ENCODE measurements at regions of chr19 and their contacts with region 1.

Region 1: GRCh38 chr19:33235269-33235995 is 9.8 kb upstream of the SLC7A10 start:
- DNase-seq: peak; percentile 96
- ATAC-seq: peak; percentile 77
- H3K4me3 Mint-ChIP-seq: no peak overlapping the region
- H3K27ac Mint-ChIP-seq: no peak overlapping the region
- H3K4me1 Mint-ChIP-seq: peaks cover 2% of the 10 kb centered on the region; the same call in 1 of the 2 replicates
- H3K27me3 Mint-ChIP-seq: peaks cover 3% of the 10 kb centered on the region
- CTCF ChIP-seq: peak; percentile 86

Region 2: GRCh38 chr19:33098023-33098652 is 137.3 kb before region 1 on chr19:
- CTCF ChIA-PET with region 1: no interaction called
- POLR2A ChIA-PET with region 1: no interaction called
- DNase-seq: no peak
- ATAC-seq: no peak
- H3K4me3 Mint-ChIP-seq: no peak overlapping the region
- H3K27ac Mint-ChIP-seq: no peak overlapping the region
- H3K4me1 Mint-ChIP-seq: no peaks in the 10 kb centered on the region
- H3K27me3 Mint-ChIP-seq: no peaks in the 10 kb centered on the region
- CTCF ChIP-seq: no peak

Region 3: DNA sequence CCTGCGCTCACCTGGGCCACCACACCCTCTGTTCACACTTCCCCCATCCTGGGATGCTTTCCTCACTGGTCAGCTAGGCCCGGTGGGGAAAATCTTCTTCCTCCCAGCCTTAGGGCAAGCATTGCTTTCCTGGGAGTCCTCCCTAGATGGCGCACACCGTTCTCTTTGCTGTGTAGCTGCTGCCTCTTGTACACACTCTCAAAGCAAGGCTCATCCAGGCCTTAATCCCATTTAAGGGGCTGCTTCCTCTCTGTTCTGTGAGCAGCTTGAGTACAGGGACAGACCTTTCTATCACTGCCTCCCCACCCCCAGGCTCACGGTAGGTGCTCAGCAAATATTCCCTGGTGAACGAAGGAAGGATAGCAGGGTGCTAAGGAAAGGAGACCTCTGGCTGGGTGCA is 20.8 kb before region 1 on chr19:
- CTCF ChIA-PET with region 1: interaction called, 19 read pairs
- POLR2A ChIA-PET with region 1: no interaction called
- DNase-seq: peak; percentile 65
- ATAC-seq: peak; percentile 76
- H3K4me3 Mint-ChIP-seq: no peak overlapping the region
- H3K27ac Mint-ChIP-seq: no peak overlapping the region; the same call in 1 of the 2 replicates
- H3K4me1 Mint-ChIP-seq: 0 out of 2 replicates have a peak, but pooled peaks cover 6% of the 10 kb centered on the region
- H3K27me3 Mint-ChIP-seq: no peaks in the 10 kb centered on the region
- CTCF ChIP-seq: no peak

Region 4: DNA sequence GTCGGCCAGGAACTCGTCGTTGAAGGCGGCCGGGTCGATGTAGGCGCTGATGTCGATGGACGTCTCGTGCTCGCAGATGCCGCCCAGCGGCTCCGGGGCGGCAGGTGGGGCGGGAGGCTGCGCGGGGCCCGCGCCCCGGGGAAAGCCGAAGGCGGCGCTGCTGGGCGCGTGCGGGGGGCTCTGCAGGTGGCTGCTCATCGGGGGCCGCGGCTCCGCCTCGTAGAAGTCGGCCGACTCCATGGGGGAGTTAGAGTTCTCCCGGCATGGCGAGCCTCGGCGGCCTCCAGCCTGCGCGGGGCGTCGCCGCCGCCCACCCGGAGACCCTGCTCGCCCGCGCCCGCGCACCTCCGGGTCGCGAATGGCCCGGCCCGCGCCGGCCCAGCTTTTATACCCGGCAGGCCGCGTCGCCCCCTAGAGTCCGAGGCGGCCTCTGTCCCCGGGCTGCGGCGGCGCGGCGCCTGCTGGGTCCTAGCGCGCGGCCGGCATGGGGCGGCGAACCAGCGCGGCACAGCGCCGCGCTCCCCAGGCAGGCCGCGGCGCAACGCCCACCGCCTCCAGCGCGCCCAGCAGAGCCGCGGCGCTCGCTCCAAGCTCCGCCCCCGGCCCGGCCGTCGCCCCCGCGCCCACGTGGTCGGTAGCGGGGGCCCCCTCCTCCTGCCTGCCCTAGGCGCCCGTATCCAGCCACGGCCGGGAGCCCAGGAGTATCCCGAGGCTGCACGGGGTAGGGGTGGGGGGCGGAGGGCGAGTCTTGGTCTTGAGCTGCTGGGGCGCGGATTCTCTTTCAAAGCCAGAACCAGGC is 66.9 kb after region 1 on chr19 and contains the start of gene CEBPA:
- CTCF ChIA-PET with region 1: interaction called, 15 read pairs
- POLR2A ChIA-PET with region 1: no interaction called
- DNase-seq: peak; percentile 80
- ATAC-seq: peak; percentile 75
- H3K4me3 Mint-ChIP-seq: peak within 1 kb of the TSS; percentile 68
- H3K27ac Mint-ChIP-seq: no peak within 1 kb of the TSS
- H3K4me1 Mint-ChIP-seq: peaks cover 30% of the 10 kb centered on the region
- H3K27me3 Mint-ChIP-seq: peaks cover 41% of the 10 kb centered on the region
- CTCF ChIP-seq: no peak
- total RNA-seq, gene CEBPA: 5.6 to 6.6 TPM (median 5.8 TPM) in 3 replicates

Region 5: GRCh38 chr19:33311326-33311682 is 75.9 kb after region 1 on chr19:
- CTCF ChIA-PET with region 1: interaction called, 16 read pairs
- POLR2A ChIA-PET with region 1: no interaction called
- DNase-seq: peak; percentile 52
- ATAC-seq: peak; percentile 47; the same call in 1 of the 2 replicates
- H3K4me3 Mint-ChIP-seq: no peak overlapping the region
- H3K27ac Mint-ChIP-seq: no peak overlapping the region
- H3K4me1 Mint-ChIP-seq: peaks cover 10% of the 10 kb centered on the region
- H3K27me3 Mint-ChIP-seq: no peaks in the 10 kb centered on the region; the same call in 1 of the 2 replicates
- CTCF ChIP-seq: peak; percentile 35; the same call in 1 of the 2 replicates

Region 6: GRCh38 chr19:33373701-33374421 is 138.4 kb after region 1 on chr19 and contains the start of gene CEBPG:
- CTCF ChIA-PET with region 1: interaction called, 15 read pairs
- POLR2A ChIA-PET with region 1: no interaction called
- DNase-seq: peak; percentile 44
- ATAC-seq: peak; percentile 9
- H3K4me3 Mint-ChIP-seq: peak within 1 kb of the TSS; percentile 84
- H3K27ac Mint-ChIP-seq: peak within 1 kb of the TSS; percentile 81
- H3K4me1 Mint-ChIP-seq: peaks cover 45% of the 10 kb centered on the region
- H3K27me3 Mint-ChIP-seq: peaks cover 7% of the 10 kb centered on the region
- CTCF ChIP-seq: no peak
- total RNA-seq, gene CEBPG: 28.9 to 33.1 TPM (median 30.4 TPM) in 3 replicates

Region 7: DNA sequence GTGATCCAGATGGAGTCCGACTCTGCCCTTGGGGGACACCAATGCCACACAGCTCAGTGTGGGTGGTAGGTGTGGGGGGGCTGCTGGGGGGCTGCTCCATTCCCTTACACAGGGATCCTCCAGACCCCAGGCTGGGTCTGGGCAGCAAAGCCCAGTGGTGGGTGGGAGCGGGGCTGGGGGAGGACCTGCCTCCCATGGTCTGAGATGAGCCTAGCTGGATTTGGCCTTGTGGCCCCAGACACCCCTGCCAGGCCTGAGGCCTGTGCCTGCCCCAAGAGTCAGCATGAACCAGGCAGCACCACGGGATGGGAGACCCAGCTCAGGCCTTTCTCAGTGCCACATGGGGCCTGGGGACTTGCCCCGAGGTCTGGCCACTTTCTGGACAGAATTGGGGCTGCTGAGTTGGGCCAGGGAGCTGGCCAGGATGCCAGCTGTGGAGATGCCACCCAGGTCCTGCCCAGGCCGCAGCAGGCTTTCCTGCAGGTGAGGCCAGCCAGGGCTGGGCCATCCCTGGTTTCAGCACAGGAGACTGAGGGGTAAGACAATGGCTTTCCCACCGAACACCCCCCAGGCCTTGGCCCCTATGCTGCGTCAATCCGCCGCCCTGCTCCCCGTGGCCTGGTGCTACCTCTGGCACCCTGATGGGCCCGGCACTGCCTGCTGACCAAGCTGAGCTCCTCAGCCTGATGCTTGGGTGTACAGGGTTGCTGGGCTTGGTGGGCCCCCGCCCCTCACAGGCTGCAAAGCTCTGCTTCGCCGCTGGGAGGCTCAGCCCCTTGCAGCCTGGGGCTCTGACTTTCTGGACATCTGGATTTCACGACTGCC is 162.3 kb after region 1 on chr19:
- CTCF ChIA-PET with region 1: interaction called, 39 read pairs
- POLR2A ChIA-PET with region 1: interaction called, 4 read pairs
- DNase-seq: peak; percentile 52
- ATAC-seq: peak; percentile 37
- H3K4me3 Mint-ChIP-seq: no peak overlapping the region
- H3K27ac Mint-ChIP-seq: 0 out of 2 replicates have a peak overlapping the region, but pooled peaks have one; percentile 49
- H3K4me1 Mint-ChIP-seq: peaks cover 10% of the 10 kb centered on the region
- H3K27me3 Mint-ChIP-seq: no peaks in the 10 kb centered on the region
- CTCF ChIP-seq: no peak

Region 8: DNA sequence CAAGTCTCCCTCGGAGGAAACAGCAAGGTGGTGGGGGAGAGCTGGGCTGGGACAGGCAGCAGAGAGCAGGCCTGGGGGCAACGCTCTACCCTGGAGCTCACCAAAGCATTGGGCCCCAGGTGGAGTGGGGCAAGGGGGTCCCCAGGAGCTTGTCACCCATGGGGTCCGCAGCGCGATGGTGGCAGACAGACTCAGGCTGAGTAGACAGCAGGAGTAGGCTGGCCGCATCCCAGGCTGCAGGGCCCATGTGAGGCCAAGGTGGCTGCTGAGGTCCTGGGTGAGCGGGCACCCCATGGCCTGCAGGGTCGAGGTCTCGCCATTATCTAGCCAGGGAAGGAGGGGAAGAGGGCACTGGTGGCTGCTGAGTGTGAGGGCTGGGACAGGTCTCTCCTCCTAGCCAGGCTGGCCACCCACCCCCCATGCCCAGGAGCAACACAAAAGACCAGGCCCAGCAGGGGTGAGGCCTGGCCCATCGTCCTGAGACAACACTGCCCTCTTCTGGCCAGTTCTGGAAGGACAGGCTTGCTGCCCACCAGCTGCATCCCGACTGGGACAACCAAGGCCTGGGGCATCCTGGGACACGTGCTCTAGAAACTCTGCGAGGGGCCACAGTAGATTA is 171.2 kb after region 1 on chr19:
- CTCF ChIA-PET with region 1: interaction called, 39 read pairs
- POLR2A ChIA-PET with region 1: no interaction called
- DNase-seq: peak; percentile 92
- ATAC-seq: peak; percentile 86
- H3K4me3 Mint-ChIP-seq: no peak overlapping the region
- H3K27ac Mint-ChIP-seq: peak overlapping the region; percentile 53; the same call in 1 of the 2 replicates
- H3K4me1 Mint-ChIP-seq: peaks cover 4% of the 10 kb centered on the region; the same call in 1 of the 2 replicates
- H3K27me3 Mint-ChIP-seq: no peaks in the 10 kb centered on the region
- CTCF ChIP-seq: peak; percentile 98

Measured in WTC11 (cell line).